GM10248 (cell line): ENCODE measurements at regions of chr18 and their contacts with region 1.

Region 1: DNA sequence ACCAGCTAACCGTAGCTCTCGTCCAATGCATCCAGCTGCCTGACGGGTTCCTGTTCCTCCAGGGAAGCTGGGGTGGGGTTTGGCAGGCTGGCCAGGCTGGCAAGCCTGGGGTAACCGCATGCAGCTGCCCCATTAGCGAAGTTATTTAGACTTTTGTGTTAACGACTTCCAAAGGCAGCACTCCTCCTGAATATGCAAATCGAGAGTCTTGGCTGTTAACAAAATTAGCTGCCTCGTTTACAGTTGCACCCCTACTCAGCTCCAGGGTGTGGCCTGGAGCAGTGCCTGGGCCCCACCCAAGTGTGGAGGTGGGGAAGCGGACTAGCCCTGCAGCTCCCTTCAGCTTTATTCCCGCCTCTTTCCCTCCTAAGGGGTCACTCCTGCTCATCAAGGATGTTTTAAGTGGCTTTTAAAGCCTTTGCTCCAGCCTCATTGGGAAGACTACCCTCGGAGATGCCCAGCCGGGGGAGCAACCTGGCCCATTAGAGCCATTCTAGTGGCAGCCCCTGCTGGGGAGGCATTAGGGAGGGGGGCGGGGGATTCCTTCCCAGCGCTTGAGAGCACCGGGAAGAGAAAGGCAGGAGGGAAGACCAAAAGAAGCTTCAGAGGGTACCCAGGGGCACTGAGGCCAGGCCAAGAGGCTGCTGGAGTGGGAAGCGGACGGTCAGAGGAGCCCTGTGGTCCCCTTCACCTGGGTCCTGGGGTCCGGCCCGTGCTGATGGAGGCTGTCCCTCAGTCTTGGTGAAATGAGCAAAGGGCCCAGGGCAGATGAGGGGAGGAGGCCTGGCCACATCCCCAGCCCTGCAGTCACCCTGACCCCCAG is 204.1 kb downstream of the CELF4 start:
- DNase-seq: no peak
- CTCF ChIP-seq: no peak

Region 2: DNA sequence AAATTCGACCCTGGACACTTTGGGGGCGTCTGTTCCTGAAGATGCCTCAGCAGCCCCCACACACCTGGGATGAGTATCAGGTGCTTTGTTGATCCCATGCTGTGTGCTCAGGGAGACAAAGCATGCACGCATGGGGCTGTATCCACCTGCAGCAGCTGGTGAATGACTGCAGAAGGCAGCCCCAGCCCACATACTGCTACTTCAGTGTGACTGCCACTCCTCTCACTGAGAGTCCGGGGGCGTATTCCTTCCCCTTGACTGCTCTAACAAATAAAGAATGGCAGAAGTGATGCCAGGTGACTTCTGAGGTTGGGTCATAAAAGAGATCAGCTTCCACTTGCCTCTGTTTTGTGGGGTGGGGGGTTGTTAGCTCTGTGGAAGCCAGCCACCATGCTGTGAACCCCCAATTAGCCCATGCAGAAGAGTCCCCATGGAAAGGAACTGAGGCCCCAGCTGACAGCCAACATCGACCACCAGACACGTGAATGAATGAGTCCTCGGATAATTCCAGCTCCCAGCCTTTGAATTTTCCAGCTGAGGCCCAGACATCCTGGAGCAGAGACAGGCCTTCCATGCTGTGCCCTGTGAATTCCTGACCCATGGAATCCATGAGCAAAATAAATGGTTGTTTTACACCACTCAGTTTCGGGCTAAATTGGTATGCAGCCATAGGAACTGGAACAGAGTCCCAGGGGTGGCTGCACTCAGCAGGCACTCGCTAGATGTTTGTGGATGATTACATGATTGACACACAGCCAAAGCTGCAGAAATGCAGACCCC is 85.2 kb before region 1 on chr18:
- CTCF ChIA-PET with region 1: no interaction called
- POLR2A ChIA-PET with region 1: no interaction called
- DNase-seq: no peak
- CTCF ChIP-seq: no peak

Region 3: GRCh38 chr18:37341473-37342086 is 20.0 kb before region 1 on chr18:
- CTCF ChIA-PET with region 1: interaction called, 11 read pairs
- POLR2A ChIA-PET with region 1: no interaction called
- DNase-seq: no peak
- CTCF ChIP-seq: no peak